ENCODE measurements at regions of chr6 and their contacts with region 1.

Region 1: DNA sequence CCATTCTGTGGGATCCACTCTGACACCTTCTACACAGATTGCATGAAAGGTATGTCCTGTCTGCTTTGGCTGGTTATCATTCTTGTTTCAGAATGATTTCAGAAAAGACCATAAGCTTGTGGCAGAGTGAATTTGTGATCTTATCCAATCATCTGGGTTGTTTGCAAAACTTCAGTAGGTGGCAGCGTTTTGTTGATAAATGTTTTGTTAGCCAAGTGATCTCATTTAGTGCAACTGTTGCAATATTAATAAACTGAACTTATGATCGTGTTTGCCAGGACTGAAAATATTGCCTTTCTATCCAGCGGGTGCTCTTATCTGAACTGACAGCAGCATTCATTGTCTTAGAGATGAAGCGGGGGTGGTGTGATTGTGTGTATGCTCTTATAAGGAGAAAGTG is 613.2 kb upstream of the NOX3 start:
- DNase-seq: no peak
- H3K4me3 ChIP-seq: no peak overlapping the region
- H3K27ac ChIP-seq: no peak overlapping the region
- H3K4me1 ChIP-seq: no peaks in the 10 kb centered on the region
- H3K27me3 ChIP-seq: no peaks in the 10 kb centered on the region
- CTCF ChIP-seq: no peak
- EP300 ChIP-seq: no peak
- POLR2A ChIP-seq: no peak

Region 2: GRCh38 chr6:154341871-154342270 is 1727.0 kb before region 1 on chr6:
- intact Hi-C with region 1: no loop called
- DNase-seq: no peak
- H3K4me3 ChIP-seq: no peak overlapping the region
- H3K27ac ChIP-seq: no peak overlapping the region
- H3K4me1 ChIP-seq: no peaks in the 10 kb centered on the region
- H3K27me3 ChIP-seq: no peaks in the 10 kb centered on the region
- CTCF ChIP-seq: no peak
- EP300 ChIP-seq: no peak
- POLR2A ChIP-seq: no peak

Region 3: GRCh38 chr6:156102129-156102528 is 33.2 kb after region 1 on chr6:
- intact Hi-C with region 1: no loop called
- DNase-seq: no peak
- H3K4me3 ChIP-seq: no peak overlapping the region
- H3K27ac ChIP-seq: no peak overlapping the region
- H3K4me1 ChIP-seq: no peaks in the 10 kb centered on the region
- H3K27me3 ChIP-seq: no peaks in the 10 kb centered on the region
- CTCF ChIP-seq: no peak
- EP300 ChIP-seq: no peak
- POLR2A ChIP-seq: no peak

Region 4: DNA sequence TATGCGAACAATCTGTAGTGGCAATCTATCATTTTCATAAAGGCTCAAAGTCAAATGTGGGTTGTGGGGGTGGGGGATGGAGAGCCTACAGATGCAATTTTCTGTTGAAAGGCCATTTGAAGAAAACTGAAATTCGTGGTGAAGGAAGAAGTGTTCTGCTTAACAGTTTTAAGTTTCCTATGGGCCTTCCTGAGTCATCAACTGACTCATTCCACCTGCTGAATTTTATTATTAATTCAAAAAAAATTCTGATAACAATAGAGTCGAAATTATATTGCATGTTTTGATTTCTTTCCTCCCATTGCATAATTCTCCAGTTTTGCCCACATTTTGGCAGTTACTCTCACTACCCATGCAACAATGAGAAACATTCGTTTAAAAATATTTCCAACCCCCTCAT is 86.0 kb after region 1 on chr6:
- intact Hi-C with region 1: loop called in 1 of 4 experiments (anchors 10 kb)
- DNase-seq: no peak
- H3K4me3 ChIP-seq: no peak overlapping the region
- H3K27ac ChIP-seq: no peak overlapping the region
- H3K4me1 ChIP-seq: peaks cover 2% of the 10 kb centered on the region
- H3K27me3 ChIP-seq: no peaks in the 10 kb centered on the region
- CTCF ChIP-seq: no peak
- EP300 ChIP-seq: no peak
- POLR2A ChIP-seq: no peak